ENCODE measurements at regions of chr12 and their contacts with region 1.

Region 1: DNA sequence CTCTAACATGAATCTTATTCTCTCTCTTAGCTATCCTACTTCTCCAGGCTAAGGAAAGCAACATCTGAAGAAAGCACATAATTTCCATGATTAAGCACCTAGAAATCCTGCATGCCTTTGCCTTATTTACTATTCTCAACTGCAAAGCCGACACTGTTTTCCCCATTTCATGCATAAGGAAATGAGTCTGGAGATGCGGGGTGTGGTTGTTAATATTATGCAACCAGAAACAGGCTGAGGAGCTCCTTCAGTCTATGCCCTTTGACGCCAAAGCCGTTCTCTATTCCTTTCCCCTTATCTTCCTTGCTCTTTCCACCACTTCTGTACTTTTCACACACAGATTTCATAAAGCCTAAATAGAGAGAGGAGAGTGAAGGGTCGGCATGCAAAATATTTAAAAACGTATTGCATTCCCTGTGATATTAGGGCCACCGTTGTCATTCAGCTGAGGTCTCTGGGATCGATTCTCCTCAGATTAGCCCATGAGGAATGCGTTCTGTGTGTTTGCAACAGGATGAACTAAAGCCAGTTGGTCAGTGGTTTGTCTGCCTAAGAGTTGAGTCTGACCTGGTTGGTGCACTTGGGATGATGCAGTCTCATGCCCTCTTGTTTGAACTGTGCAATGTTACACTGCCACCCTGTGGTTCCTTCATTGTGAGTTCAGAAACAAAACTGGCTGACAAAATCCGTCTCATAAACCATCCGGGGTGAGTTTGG is 53.1 kb upstream of the PLEKHG7 start:
- DNase-seq: peak; percentile 70
- H3K4me3 ChIP-seq: no peak overlapping the region
- H3K27ac ChIP-seq: no peak overlapping the region
- H3K4me1 ChIP-seq: no peaks in the 10 kb centered on the region
- CTCF ChIP-seq: peak; percentile 89

Region 2: DNA sequence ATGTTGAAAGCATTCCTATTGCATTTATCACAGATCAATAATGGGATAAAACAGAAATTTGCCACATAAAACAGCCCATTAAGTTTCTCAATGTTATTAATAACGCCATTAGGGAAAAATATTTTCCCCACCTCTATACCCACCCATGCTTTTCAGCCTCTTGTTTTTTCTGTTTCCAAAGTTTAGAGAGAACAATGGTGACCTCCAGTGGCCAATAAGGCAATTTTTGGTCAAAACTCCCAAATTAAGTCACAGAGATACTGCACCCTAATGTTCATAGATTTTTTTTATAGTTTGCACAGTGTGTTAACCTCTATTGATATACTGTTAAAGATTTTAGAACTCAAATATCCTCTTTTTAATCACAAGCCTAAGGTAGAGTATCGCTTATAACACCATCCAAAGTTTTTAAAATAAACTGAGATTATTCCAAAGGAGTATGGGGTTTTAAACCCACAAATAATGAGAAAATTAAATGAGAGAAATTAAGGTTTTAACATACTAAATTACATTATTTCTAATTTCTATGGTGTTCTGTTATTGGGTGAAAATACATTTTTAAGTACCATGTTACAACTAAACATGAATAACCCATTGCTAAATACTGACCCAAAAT is 1282.3 kb before region 1 on chr12:
- CTCF ChIA-PET with region 1: no interaction called
- POLR2A ChIA-PET with region 1: no interaction called
- intact Hi-C with region 1: loop called (anchors 5 kb)
- DNase-seq: peak; percentile 10
- H3K4me3 ChIP-seq: no peak overlapping the region
- H3K27ac ChIP-seq: no peak overlapping the region
- H3K4me1 ChIP-seq: no peaks in the 10 kb centered on the region
- CTCF ChIP-seq: peak; percentile 78

Region 3: DNA sequence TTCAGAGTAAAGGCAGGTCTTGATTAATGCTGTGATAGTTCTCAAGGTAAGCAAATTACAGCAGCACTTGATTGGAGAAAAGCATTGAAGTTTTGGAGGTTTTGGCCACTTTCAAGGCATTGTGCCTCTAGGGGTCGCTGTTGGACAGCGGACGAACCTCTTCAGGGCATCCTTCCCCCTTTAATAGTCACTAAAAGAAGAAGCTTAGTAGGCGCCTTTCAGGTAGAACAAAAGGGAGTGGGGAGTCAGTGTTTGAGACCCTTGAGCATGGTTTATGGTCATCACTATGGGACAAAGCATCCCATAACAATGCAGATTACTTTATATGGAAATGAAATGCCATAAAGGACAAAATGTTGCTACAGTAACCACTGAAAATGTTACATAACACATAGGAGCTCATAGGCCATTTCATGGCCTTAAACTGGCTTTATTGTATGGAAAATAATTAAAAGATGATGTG is 1267.6 kb before region 1 on chr12:
- CTCF ChIA-PET with region 1: no interaction called
- POLR2A ChIA-PET with region 1: no interaction called
- intact Hi-C with region 1: loop called (anchors 5 kb)
- DNase-seq: peak; percentile 77
- H3K4me3 ChIP-seq: no peak overlapping the region
- H3K27ac ChIP-seq: no peak overlapping the region
- H3K4me1 ChIP-seq: no peaks in the 10 kb centered on the region
- CTCF ChIP-seq: peak; percentile 94

Region 4: DNA sequence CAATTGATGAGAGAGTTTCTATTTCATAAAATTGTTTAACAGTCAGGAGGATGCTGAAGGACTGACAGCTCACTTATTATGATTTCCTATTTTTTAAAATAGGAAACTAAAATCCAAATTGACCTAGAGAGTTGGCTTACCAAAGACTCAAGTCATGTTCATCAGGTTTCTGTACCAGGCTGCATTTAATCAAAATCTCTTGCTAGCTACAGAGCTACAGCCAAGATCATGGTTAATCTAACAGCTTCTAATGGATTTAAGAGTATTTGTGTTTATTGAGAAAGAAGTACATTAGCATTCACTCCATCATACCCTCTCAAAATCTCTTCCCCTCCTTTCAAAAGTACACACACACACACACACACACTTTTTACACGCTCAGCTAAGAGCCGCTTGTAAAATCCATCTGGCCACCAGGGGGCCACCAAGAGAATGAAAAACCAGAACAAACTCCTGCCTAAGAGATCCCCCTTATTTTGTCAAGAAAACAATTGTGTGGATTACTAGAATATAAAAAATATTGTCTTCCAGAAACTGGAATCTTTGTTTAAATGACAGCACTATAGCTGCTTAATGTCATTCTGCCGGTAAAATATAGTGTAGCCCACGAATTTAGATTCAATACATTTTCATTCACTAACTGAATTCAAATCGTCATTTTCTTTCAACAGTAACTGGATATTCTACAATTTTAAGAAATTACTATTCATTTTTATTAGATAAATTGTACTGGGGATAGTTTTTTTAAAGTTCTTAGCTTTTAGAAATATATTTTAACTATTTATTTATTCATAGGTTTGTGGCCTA is 838.0 kb before region 1 on chr12:
- CTCF ChIA-PET with region 1: no interaction called
- POLR2A ChIA-PET with region 1: no interaction called
- intact Hi-C with region 1: loop called (anchors 1 kb)
- DNase-seq: peak; percentile 66
- H3K4me3 ChIP-seq: no peak overlapping the region
- H3K27ac ChIP-seq: no peak overlapping the region
- H3K4me1 ChIP-seq: no peaks in the 10 kb centered on the region
- CTCF ChIP-seq: peak; percentile 97

Region 5: DNA sequence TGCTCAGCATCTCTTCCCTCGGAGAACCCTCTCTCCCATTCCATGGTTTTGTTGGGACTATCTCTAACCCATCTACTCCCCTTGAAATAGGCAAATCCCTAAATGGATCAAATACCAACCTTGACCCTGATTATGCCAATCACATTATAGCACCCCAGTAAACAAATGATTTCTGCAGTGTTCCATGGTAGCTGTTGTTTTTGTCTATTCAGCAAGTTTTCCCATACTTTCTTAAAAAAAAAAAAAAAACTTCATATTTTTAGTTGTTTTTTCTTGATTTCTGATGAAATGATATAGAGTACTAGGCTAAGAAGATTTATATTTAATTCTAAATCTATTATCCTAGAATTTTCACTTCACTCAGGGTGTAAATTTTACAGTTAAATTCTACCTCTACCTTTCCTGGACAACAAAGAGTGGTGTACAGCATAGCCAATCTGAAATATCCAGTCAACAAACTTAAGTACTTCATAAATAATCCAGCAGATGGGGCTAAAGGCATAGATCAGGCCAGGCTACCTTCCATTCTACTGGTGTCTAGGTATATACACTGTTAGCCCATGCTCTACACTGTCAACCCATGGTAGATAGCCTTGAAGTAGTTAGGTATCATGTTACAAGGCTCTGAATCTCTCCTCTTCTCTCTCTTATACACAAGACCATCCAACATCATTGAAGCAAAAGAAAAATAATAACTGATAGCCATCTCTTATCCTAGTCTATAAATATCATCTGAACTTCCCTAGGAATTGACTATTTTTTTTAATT is 135.3 kb after region 1 on chr12:
- CTCF ChIA-PET with region 1: no interaction called
- POLR2A ChIA-PET with region 1: no interaction called
- intact Hi-C with region 1: no loop called
- DNase-seq: peak; percentile 79
- H3K4me3 ChIP-seq: no peak overlapping the region
- H3K27ac ChIP-seq: no peak overlapping the region
- H3K4me1 ChIP-seq: no peaks in the 10 kb centered on the region
- CTCF ChIP-seq: peak; percentile 84